Endothelial cell of umbilical vein (primary cell): ENCODE measurements at regions of chr3 and their contacts with region 1.

Region 1: GRCh38 chr3:52090131-52090932 is 34.0 kb upstream of the DUSP7 start:
- DNase-seq: peak; percentile 79
- H3K4me3 ChIP-seq: no peak overlapping the region
- H3K27ac ChIP-seq: peak overlapping the region; percentile 96
- H3K4me1 ChIP-seq: peaks cover 58% of the 10 kb centered on the region
- H3K27me3 ChIP-seq: no peaks in the 10 kb centered on the region
- CTCF ChIP-seq: no peak
- POLR2A ChIP-seq: no peak

Region 2: DNA sequence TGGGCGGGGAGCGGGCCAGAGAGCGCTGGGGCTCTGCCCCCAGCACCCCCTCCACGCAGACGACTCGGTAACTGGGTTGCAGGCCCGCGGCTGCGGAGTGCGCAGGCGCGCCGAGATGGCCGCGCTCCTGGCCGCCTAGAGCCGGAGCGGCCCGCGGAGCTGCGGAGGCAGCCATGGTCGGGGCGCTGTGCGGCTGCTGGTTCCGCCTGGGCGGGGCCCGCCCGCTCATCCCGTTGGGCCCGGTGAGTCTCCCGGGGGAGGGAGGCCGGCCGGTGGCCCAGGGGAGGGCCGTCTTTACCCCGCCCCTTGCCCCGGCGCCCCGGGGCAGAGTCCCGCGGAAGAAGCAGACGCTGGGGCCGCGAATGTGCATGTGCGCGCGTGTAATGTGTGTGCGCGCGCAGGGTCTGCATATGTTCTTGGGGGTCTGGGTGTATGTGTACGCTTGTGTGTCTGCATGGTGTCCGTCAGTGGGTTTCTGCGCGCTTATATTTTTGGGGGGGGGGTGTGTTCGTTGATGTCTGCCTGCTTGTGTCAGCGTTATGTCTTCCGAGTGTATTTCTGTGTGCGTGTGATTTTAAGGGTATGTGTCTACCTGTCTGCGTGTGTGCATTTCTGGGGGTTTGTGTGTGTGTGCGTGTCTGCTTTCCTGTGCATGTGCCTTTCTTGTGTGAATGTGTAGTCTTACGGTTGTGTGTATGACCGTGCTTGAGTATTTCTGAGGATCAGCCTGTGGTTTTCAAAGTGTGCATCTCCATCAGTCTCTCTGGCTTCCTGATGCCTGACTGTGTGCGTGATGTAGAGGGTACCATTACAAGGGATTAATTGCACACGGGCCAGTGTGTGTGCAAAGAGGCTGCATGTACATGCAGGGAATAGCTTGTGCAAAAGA is 115.1 kb before region 1 on chr3 and contains the start of gene ABHD14A:
- CTCF ChIA-PET with region 1: no interaction called
- POLR2A ChIA-PET with region 1: no interaction called
- dilution Hi-C with region 1: no loop called
- intact Hi-C with region 1: no loop called
- DNase-seq: peak; percentile 63
- H3K4me3 ChIP-seq: peak within 1 kb of the TSS; percentile 12 to 68 (median 63)
- H3K27ac ChIP-seq: peak within 1 kb of the TSS; percentile 55
- H3K4me1 ChIP-seq: peaks cover 22% of the 10 kb centered on the region
- H3K27me3 ChIP-seq: no peaks in the 10 kb centered on the region
- CTCF ChIP-seq: no peak
- POLR2A ChIP-seq: peak; percentile 87
- total RNA-seq, gene ABHD14A: 6.6 and 8.2 TPM in 2 replicates

Region 3: DNA sequence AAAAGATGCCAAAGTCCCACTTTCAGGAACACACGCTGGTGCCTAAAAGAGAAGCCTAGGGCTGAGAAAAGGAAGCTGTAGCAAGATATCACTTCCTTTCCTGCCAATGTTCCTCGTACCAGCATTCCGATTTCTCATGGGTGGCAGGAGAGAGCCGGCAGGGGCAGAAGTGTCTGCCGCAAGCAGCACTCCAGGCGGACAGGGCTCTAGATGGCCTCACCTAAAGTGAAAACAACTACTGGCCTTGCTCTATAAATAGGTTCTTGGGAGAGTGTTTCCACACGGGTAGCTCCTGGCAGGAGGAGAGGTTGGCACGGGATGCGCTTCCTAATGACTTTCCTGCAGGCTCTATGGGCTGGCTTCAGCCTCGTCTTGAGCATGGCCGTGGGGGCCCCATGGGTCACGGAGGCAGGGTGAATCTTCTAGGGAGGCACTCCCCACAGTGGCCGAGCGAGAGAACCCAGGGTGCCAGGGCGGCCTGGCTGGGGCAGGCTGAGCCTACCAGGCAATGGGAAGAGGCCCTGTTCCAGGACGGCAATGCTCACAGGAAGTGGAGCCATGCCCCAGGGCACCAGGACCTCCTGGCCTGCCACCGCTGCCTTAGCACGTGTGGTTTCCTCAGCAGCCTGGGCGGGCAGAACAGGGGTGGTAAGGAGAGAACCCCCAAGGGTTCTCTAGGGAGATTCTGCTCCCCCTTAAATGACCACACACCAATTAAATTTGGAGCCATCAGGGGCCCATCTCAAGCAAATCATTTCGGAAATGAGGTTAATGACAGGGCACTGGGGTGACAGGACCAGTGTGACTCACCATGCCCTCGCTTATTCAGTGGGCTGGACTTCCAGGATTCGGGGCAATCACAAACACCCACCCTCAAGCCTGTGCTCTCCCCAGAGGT is 19.4 kb before region 1 on chr3:
- CTCF ChIA-PET with region 1: interaction called, 4 read pairs
- POLR2A ChIA-PET with region 1: interaction called, 3 read pairs
- dilution Hi-C with region 1: no loop called
- intact Hi-C with region 1: loop called (anchors 2 kb)
- DNase-seq: peak; percentile 57
- H3K4me3 ChIP-seq: no peak overlapping the region
- H3K27ac ChIP-seq: no peak overlapping the region
- H3K4me1 ChIP-seq: peaks cover 15% of the 10 kb centered on the region
- H3K27me3 ChIP-seq: no peaks in the 10 kb centered on the region
- CTCF ChIP-seq: no peak
- POLR2A ChIP-seq: no peak

Region 4: DNA sequence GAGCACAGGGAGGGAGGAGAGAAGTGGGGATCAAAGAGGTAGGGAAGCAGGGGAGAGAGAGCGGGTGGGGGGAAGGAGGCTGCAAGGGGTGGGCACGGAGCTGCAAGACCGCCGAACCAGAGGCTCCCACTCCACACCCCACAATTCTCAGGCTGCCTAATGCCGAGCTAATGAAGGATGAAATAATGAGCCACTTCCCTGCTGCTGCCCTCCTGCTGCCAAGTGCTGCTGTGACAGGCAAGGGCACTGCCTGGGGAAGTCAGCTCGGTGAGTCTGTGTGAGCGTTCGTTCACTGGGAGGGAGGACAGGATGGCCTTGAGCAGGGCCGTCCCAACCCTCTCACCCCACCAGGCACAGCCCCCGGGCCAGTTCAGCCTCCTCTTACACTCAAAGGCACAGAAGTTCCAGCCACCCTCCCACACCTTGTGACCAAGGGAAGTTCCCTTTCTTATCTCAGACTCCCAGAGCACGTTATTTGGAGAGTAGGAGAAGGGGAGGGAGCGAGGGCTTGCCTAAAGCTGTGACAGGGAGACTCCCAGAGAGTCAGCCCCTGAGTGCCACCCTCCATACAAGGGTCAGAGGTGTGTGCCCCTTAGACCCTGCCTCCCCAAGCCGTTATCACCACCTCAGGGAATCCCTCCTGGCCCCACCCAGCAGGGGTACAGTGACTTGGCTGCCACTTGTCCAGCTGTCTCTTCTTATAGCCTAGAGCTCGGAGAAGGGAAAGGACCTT is 209.7 kb after region 1 on chr3:
- CTCF ChIA-PET with region 1: no interaction called
- POLR2A ChIA-PET with region 1: no interaction called
- dilution Hi-C with region 1: no loop called
- intact Hi-C with region 1: no loop called
- DNase-seq: peak; percentile 62
- H3K4me3 ChIP-seq: no peak overlapping the region
- H3K27ac ChIP-seq: no peak overlapping the region
- H3K4me1 ChIP-seq: peaks cover 15% of the 10 kb centered on the region
- H3K27me3 ChIP-seq: no peaks in the 10 kb centered on the region
- CTCF ChIP-seq: peak in 1 of 2 donors; percentile 24
- POLR2A ChIP-seq: no peak